ENCODE measurements at regions of chrX and their contacts with region 1.

Region 1: GRCh38 chrX:10119399-10119990 is 37.3 kb upstream of the CLCN4 start:
- DNase-seq: no peak
- ATAC-seq: peak; percentile 69

Region 2: GRCh38 chrX:9873952-9874351 is 245.5 kb before region 1 on chrX:
- intact Hi-C with region 1: loop called (anchors 5 kb)
- DNase-seq: no peak
- ATAC-seq: no peak

Region 3: GRCh38 chrX:9885150-9885549 is 234.3 kb before region 1 on chrX:
- intact Hi-C with region 1: loop called (anchors 5 kb)
- DNase-seq: no peak
- ATAC-seq: peak; percentile 72

Region 4: DNA sequence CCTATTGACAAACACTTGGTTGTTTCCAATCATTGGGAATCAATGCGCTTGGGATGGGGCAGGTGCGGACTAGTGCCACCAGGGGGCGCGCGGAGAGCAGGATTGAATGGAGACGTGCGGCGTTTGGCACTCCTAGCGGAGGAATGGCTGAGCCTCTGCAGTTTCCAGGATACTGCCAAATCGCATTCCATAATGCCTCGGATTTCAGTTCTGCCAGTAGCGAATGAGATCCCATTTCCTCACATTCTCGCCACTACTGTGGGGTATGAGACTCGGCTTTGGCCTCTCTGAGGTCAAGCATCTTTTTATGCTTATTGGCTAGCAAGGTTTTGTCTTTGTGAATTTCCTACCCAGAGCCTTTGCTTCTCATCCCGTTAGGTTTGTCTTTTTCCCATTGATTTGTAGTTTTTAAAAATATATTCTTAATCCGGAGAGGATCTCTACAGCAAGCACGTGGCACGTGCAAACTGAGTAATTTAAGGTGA is 123.6 kb before region 1 on chrX:
- intact Hi-C with region 1: loop called (anchors 1 kb)
- DNase-seq: peak; percentile 92
- ATAC-seq: peak; percentile 90